CD4-positive, alpha-beta T cell (primary cell): ENCODE measurements at regions of chr19 and their contacts with region 1.

Region 1: DNA sequence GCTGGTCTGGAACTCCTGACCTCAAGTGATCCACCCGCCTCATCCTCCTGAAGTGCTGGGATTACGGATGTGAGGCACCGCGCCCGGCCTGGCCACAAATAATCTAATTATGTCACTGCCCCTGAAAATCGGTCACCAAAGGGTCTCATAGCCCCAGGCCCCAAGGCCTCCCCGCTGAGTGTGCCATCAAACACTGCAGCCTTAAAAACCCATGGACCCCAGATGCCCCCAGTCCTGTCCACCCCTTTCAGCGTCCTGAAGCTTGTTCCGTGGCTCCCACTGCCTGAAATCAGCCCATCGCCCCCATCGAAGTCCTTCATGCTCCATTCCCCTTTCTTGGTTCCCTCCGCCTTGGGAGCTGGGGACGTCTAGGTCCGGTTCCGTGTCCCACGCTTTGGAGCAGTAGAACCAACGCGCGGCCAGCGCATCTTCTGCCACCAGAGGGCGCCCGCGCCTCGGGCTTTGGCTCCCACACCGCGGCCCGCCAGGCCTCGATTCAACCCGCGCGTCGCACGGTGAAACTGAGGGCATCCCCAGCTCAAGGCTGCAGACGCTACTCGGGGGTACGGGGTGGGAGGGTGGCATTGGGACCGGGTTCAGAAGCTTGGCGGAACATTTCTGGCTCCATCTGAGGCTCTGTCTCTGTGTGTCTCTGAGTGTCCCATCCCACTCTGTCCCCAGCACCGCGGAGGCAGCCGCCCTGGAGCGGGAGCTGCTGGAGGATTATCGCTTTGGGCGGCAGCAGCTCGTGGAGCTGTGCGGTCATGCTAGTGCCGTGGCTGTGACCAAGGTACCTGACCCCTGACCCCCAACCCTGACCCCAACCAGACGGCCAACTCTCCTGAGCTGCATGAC is 3.5 kb downstream of the YJEFN3 start:
- DNase-seq: peak; percentile 69 to 94 (median 86)
- ATAC-seq: peak; percentile 84
- H3K4me3 ChIP-seq: no peak overlapping the region
- H3K4me3 Mint-ChIP-seq: peak overlapping the region; percentile 43
- H3K27ac ChIP-seq: no peak overlapping the region
- H3K27ac Mint-ChIP-seq: peak overlapping the region; percentile 47
- H3K4me1 ChIP-seq: peaks cover 11% of the 10 kb centered on the region
- H3K4me1 Mint-ChIP-seq: peaks cover 22% of the 10 kb centered on the region
- H3K27me3 ChIP-seq: no peaks in the 10 kb centered on the region
- H3K27me3 Mint-ChIP-seq: no peaks in the 10 kb centered on the region
- CTCF ChIP-seq: peak; percentile 88

Region 2: DNA sequence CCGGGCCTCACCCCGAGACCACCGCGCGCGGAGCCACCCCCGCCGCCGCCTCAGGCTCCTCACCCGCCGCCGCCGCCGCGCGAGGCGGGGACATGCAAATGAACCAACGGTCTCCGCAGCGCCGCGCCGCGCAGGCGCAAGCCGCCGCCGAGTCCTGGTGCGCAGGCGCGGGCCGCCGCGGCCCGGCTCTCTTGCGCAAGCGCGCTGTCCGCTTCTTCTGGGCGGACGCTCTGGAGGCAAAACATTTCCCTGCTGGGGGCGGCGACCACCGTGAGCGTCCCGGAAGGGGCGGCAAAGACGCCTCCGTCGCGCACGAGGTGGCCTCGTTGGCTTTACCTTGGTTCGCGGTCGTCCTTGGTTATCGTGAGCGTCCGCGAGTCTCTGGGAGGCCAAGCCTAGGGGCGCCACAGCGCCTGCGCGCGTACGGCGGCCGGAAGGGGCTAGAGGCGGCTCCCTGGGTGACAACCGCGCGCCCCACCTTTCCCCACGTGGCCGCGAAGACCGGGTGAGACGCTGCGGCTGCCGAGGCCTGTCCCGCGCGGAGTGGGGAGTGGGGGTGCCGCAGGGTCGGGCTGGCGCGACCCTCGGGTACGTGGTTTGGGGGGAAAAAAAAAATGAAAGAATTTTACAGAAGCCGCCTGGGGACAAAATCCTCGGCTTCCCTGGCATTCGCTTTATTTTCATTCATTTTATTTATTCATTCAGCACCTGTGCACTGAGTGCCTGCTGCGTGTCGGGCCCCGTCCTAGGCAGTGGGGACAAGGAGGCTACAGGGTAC is 498.6 kb before region 1 on chr19 and contains the starts of genes ARMC6 and SUGP2:
- CTCF ChIA-PET with region 1: no interaction called
- POLR2A ChIA-PET with region 1: no interaction called
- intact Hi-C with region 1: no loop called
- DNase-seq: peak; percentile 77 to 96 (median 87)
- ATAC-seq: peak; percentile 71
- H3K4me3 ChIP-seq: peak within 1 kb of the TSS; percentile 86
- H3K4me3 Mint-ChIP-seq: peak within 1 kb of the TSS; percentile 99
- H3K27ac ChIP-seq: peak within 1 kb of the TSS; percentile 77 to 81
- H3K27ac Mint-ChIP-seq: peak within 1 kb of the TSS; percentile 88
- H3K4me1 ChIP-seq: peaks cover 42% of the 10 kb centered on the region
- H3K4me1 Mint-ChIP-seq: peaks cover 38% of the 10 kb centered on the region
- H3K27me3 ChIP-seq: no peaks in the 10 kb centered on the region
- H3K27me3 Mint-ChIP-seq: no peaks in the 10 kb centered on the region
- CTCF ChIP-seq: no peak
- total RNA-seq, gene ARMC6: 5.9 to 6.0 TPM
- total RNA-seq, gene SUGP2: 106 to 110 TPM

Region 3: DNA sequence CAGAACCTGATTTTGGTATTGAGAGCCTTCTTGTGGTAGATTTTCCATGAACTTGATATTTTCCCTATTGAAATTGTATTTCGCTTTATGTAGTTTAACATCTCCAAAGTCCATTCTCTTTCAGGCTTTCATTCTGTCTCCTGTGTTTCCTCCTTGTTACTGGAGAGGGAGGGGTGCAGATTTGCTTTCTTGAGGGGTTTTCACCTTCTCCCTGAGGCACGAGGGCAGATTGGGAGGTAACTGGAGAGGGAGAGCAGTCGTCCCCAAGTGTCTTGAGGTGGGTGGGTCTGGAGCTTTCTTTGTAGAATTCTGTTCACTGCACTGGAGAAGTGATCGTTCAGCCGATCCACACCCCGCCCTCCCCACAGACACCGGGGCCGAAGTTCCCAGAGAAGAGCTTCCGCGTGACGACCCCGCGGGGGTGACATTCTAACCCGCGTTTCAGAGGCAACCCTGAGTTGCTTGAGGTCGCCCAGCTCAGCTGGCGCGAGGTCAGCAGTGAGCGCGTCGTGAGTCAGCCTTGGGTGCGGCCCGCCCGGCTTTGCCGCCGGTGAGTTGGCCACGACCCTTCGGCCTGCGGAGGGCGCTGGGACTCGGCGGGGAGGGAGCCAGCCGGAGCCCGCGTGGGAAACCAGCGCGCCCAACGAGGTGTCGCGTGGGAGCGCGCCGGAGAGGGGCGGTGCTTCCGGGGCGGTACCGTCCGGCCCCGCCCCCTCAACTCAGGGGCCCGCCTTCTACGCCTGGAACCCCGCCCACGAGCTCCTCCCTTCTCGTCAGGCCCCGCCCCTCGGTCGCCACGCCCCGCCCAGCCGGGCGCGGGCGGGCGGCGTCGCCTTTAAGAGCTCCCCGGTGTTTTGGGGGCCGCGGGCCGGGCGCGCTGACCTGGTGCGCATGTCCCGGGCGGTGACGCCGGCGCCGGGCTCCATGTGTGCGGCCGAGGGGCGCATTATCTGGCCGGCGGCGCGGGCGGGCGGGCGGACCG is 127.0 kb before region 1 on chr19 and contains the start of gene GATAD2A:
- CTCF ChIA-PET with region 1: no interaction called
- POLR2A ChIA-PET with region 1: no interaction called
- intact Hi-C with region 1: no loop called
- DNase-seq: peak; percentile 84 to 96 (median 90)
- ATAC-seq: peak; percentile 84
- H3K4me3 ChIP-seq: peak within 1 kb of the TSS; percentile 61
- H3K4me3 Mint-ChIP-seq: peak within 1 kb of the TSS; percentile 96
- H3K27ac ChIP-seq: peak within 1 kb of the TSS; percentile 71 to 72
- H3K27ac Mint-ChIP-seq: peak within 1 kb of the TSS; percentile 90
- H3K4me1 ChIP-seq: peaks cover 46% of the 10 kb centered on the region
- H3K4me1 Mint-ChIP-seq: peaks cover 70% of the 10 kb centered on the region
- H3K27me3 ChIP-seq: no peaks in the 10 kb centered on the region
- H3K27me3 Mint-ChIP-seq: no peaks in the 10 kb centered on the region
- CTCF ChIP-seq: peak; percentile 49
- total RNA-seq, gene GATAD2A: 104 to 107 TPM

Region 4: DNA sequence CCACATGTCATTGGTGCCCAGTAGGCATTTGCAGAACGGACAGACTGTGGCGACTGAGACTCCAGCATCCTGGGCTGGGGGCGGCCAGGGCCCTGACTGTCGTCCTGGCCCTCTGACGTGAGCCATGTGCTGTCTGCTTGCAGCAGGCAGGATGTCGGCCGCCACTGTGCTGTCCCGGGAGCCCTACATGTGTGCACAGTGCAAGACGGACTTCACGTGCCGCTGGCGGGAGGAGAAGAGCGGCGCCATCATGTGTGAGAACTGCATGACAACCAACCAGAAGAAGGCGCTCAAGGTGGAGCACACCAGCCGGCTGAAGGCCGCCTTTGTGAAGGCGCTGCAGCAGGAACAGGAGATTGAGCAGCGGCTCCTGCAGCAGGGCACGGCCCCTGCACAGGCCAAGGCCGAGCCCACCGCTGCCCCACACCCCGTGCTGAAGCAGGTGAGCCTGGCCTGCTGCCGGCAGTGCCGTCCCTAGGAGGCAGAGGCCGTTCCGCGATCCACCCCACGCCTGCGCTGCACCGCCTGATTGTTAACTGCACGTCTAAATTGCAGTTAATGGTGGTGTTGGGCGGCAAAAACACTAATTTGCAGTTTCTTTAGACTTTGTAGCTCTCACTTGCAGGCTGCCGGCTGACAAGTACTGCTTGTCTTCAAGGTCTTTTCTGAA is 31.1 kb before region 1 on chr19:
- CTCF ChIA-PET with region 1: no interaction called
- POLR2A ChIA-PET with region 1: no interaction called
- intact Hi-C with region 1: no loop called
- DNase-seq: peak in 1 of 14 experiments; percentile 22
- ATAC-seq: no peak
- H3K4me3 ChIP-seq: no peak overlapping the region
- H3K4me3 Mint-ChIP-seq: no peak overlapping the region
- H3K27ac ChIP-seq: no peak overlapping the region
- H3K27ac Mint-ChIP-seq: no peak overlapping the region
- H3K4me1 ChIP-seq: no peaks in the 10 kb centered on the region
- H3K4me1 Mint-ChIP-seq: no peaks in the 10 kb centered on the region
- H3K27me3 ChIP-seq: no peaks in the 10 kb centered on the region
- H3K27me3 Mint-ChIP-seq: no peaks in the 10 kb centered on the region
- CTCF ChIP-seq: no peak

Region 5: GRCh38 chr19:19562665-19563347 is 30.6 kb after region 1 on chr19:
- CTCF ChIA-PET with region 1: interaction called, 7 read pairs
- POLR2A ChIA-PET with region 1: interaction called, 10 read pairs
- intact Hi-C with region 1: no loop called
- DNase-seq: peak in 10 of 14 experiments; percentile 27 to 74 (median 45)
- ATAC-seq: peak; percentile 72
- H3K4me3 ChIP-seq: no peak overlapping the region
- H3K4me3 Mint-ChIP-seq: no peak overlapping the region
- H3K27ac ChIP-seq: no peak overlapping the region
- H3K27ac Mint-ChIP-seq: no peak overlapping the region
- H3K4me1 ChIP-seq: peaks cover 19% of the 10 kb centered on the region
- H3K4me1 Mint-ChIP-seq: peaks cover 33% of the 10 kb centered on the region
- H3K27me3 ChIP-seq: no peaks in the 10 kb centered on the region
- H3K27me3 Mint-ChIP-seq: no peaks in the 10 kb centered on the region
- CTCF ChIP-seq: peak; percentile 36

Region 6: GRCh38 chr19:19606021-19606420 is 73.8 kb after region 1 on chr19:
- CTCF ChIA-PET with region 1: interaction called, 14 read pairs
- POLR2A ChIA-PET with region 1: interaction called, 4 read pairs
- intact Hi-C with region 1: no loop called
- DNase-seq: peak in 11 of 14 experiments; percentile 42 to 88 (median 64)
- ATAC-seq: peak; percentile 87
- H3K4me3 ChIP-seq: no peak overlapping the region
- H3K4me3 Mint-ChIP-seq: peak overlapping the region; percentile 77
- H3K27ac ChIP-seq: peak overlapping the region; percentile 64 to 66
- H3K27ac Mint-ChIP-seq: peak overlapping the region; percentile 86
- H3K4me1 ChIP-seq: peaks cover 70% of the 10 kb centered on the region
- H3K4me1 Mint-ChIP-seq: peaks cover 65% of the 10 kb centered on the region
- H3K27me3 ChIP-seq: no peaks in the 10 kb centered on the region
- H3K27me3 Mint-ChIP-seq: no peaks in the 10 kb centered on the region
- CTCF ChIP-seq: no peak

Region 7: GRCh38 chr19:19643158-19644053 is 111.2 kb after region 1 on chr19 and contains the start of gene GMIP:
- CTCF ChIA-PET with region 1: interaction called, 57 read pairs
- POLR2A ChIA-PET with region 1: interaction called, 11 read pairs
- intact Hi-C with region 1: loop called (anchors 1 kb)
- DNase-seq: peak; percentile 82 to 94 (median 88)
- ATAC-seq: peak; percentile 90
- H3K4me3 ChIP-seq: peak within 1 kb of the TSS; percentile 100
- H3K4me3 Mint-ChIP-seq: peak within 1 kb of the TSS; percentile 99
- H3K27ac ChIP-seq: peak within 1 kb of the TSS; percentile 91 to 97
- H3K27ac Mint-ChIP-seq: peak within 1 kb of the TSS; percentile 95
- H3K4me1 ChIP-seq: peaks cover 33% of the 10 kb centered on the region
- H3K4me1 Mint-ChIP-seq: peaks cover 23% of the 10 kb centered on the region
- H3K27me3 ChIP-seq: no peaks in the 10 kb centered on the region
- H3K27me3 Mint-ChIP-seq: no peaks in the 10 kb centered on the region
- CTCF ChIP-seq: peak; percentile 74
- total RNA-seq, gene GMIP: 89.6 to 97.0 TPM

Region 8: DNA sequence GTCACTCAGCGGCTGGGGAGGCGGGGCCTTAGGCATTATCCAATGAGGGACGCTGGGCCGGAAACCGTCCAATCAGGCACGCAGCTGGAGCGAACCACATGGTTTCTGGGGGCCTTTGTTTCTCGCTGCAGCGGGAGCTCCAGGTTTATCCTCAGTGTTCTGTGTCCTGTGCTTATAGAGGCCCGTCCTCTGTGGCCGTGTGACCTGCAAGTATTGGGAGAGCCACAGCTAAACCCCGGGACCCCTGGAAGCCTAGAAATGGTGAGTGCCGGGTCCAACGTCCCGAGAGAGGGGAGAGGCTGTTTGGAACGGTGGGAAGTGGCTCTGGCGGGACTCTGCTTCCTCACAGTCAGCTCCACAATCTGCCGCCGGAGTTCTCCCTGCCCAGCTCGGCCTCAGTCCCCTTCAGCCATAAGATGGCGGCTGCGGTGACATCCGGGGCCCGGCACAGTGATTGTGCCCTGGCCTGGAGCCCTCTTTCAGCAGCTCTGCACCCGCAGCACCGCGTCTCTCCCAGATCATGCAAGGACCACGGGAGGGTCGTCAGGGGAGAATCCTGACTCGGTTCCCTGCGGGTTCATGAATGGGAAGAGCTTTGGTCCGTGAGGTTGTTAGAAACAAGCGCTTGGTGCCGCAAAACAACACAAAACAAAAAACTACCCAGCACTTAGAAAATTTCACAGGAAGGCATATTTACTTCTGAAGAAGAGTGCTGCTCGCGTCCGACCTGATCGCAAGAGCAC is 333.7 kb after region 1 on chr19 and contains the start of gene ZNF253:
- CTCF ChIA-PET with region 1: interaction called, 4 read pairs
- POLR2A ChIA-PET with region 1: interaction called, 15 read pairs
- intact Hi-C with region 1: no loop called
- DNase-seq: peak; percentile 88 to 96 (median 94)
- ATAC-seq: peak; percentile 90
- H3K4me3 ChIP-seq: peak within 1 kb of the TSS; percentile 89
- H3K4me3 Mint-ChIP-seq: peak within 1 kb of the TSS; percentile 97
- H3K27ac ChIP-seq: peak within 1 kb of the TSS; percentile 86 to 88
- H3K27ac Mint-ChIP-seq: peak within 1 kb of the TSS; percentile 97
- H3K4me1 ChIP-seq: peaks cover 13% of the 10 kb centered on the region
- H3K4me1 Mint-ChIP-seq: peaks cover 41% of the 10 kb centered on the region
- H3K27me3 ChIP-seq: no peaks in the 10 kb centered on the region
- H3K27me3 Mint-ChIP-seq: no peaks in the 10 kb centered on the region
- CTCF ChIP-seq: no peak
- total RNA-seq, gene ZNF253: 4.9 to 5.2 TPM

Region 9: DNA sequence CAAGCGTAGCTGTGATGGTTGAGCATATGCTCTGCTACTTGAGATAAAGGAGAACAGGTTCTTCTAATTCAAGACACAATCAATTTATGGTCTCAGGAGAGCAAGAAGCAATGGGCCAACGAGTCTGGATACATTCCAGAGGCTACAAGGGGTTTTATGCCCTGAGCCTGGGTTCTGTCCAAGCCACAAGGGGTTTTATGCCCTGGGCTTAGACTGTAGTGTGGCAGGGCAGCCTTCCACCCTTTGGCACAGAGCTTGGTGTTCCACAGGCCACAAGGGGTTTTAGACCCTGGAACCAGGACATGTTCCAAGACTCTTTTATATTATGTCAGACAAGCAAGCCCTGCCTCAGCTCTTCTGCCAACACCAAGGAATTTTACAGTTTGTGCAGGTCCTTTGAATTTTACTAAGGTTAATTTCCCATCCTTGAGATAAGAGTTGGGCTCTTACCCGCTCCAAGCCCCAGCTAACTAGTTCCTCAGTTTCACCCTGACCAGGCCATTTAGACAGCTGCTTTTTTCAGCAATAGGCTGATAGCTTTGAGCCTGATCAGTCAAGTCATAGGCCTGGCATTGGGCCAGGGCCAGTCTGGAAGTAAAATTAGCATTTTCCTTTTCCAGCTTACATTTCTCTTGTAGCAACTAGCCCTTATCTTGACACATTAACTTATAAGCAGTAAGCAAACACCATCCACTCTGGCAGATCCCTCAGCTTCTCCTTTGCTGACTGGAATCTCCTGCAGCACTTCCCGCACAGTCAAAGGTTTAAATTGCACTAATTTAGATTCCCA is 938.4 kb after region 1 on chr19:
- CTCF ChIA-PET with region 1: no interaction called
- POLR2A ChIA-PET with region 1: no interaction called
- intact Hi-C with region 1: no loop called
- DNase-seq: no peak
- ATAC-seq: no peak
- H3K4me3 ChIP-seq: no peak overlapping the region
- H3K4me3 Mint-ChIP-seq: no peak overlapping the region
- H3K27ac ChIP-seq: no peak overlapping the region
- H3K27ac Mint-ChIP-seq: no peak overlapping the region
- H3K4me1 ChIP-seq: no peaks in the 10 kb centered on the region
- H3K4me1 Mint-ChIP-seq: no peaks in the 10 kb centered on the region
- H3K27me3 ChIP-seq: no peaks in the 10 kb centered on the region
- H3K27me3 Mint-ChIP-seq: no peaks in the 10 kb centered on the region
- CTCF ChIP-seq: no peak